ENCODE measurements at regions of chr17 and their contacts with region 1.

Region 1: DNA sequence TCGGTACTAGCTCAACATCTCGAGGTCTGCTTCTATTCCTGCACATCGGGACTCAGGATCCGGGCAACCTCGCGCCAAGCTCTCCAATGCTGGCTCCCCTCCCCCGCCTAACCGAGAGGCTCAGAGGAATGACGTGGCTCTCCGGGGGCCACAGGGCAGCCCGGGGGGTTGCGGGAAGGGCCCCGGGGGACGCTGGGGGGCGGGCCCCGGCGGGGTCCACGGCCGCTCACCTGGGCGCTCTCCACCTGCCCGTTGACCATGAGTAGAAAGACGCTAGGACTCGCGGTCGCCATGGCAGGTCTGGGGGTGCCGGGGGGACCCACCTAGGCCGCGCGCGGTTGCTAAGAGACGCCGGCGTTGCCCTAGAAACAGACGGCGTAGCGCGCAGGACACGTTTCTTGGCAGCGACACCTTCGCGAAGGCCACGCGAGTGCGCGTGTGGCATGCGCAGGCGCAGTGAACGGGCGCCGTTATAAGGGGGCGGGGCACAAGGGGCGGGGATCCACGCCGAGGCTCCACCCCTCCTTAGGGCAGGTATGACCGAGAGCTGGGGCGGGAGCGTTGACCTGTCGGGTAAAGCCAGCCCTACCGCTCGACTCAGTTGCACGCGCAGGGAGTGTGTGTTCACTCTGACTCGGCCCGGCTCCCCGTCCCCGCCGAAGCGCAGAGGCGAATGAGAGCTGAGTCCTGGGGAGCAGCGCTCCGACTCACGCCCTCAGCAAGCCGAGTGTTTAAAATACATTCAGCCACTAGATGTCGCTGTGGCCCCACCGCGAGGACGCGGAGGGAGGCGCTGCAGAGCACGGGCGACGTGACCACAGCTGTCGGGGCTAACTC is at the start of gene B9D1:
- DNase-seq: peak; percentile 89 to 97
- H3K4me3 ChIP-seq: peak within 1 kb of the TSS; percentile 64 to 92
- H3K27ac ChIP-seq: peak within 1 kb of the TSS; percentile 85 to 95
- H3K4me1 ChIP-seq: peaks cover 0 to 23% (median 11%) of the 10 kb centered on the region in 4 donors
- H3K27me3 ChIP-seq: no peaks in the 10 kb centered on the region
- CTCF ChIP-seq: peak; percentile 95 to 99

Region 2: GRCh38 chr17:19418251-19418992 is 55.9 kb after region 1 on chr17:
- intact Hi-C with region 1: loop called (anchors 10 kb)
- DNase-seq: peak in 1 of 2 donors; percentile 54
- H3K4me3 ChIP-seq: no peak overlapping the region
- H3K27ac ChIP-seq: peak overlapping the region in 1 of 2 donors; percentile 30
- H3K4me1 ChIP-seq: no peaks in the 10 kb centered on the region
- H3K27me3 ChIP-seq: no peaks in the 10 kb centered on the region
- CTCF ChIP-seq: peak in 1 of 2 experiments; percentile 8

Region 3: GRCh38 chr17:19447085-19447583 is 84.6 kb after region 1 on chr17:
- intact Hi-C with region 1: loop called (anchors 2 kb)
- DNase-seq: peak; percentile 76
- H3K4me3 ChIP-seq: no peak overlapping the region
- H3K27ac ChIP-seq: peak overlapping the region; percentile 84 to 86
- H3K4me1 ChIP-seq: peaks cover 0 to 31% (median 28%) of the 10 kb centered on the region in 4 donors
- H3K27me3 ChIP-seq: no peaks in the 10 kb centered on the region
- CTCF ChIP-seq: peak; percentile 94 to 97

Region 4: GRCh38 chr17:19766422-19767270 is 404.2 kb after region 1 on chr17:
- intact Hi-C with region 1: loop called (anchors 5 kb)
- DNase-seq: peak; percentile 75 to 85
- H3K4me3 ChIP-seq: no peak overlapping the region
- H3K27ac ChIP-seq: no peak overlapping the region
- H3K4me1 ChIP-seq: peaks cover 0 to 19% (median 12%) of the 10 kb centered on the region in 4 donors
- H3K27me3 ChIP-seq: no peaks in the 10 kb centered on the region
- CTCF ChIP-seq: peak; percentile 92 to 98